PC-3 (cell line): ENCODE measurements at regions of chr11 and their contacts with region 1.

Region 1: GRCh38 chr11:86802601-86803051 is 2.3 kb downstream of the PRSS23 start:
- DNase-seq: peak; percentile 78
- ATAC-seq: peak; percentile 43
- H3K4me3 ChIP-seq: peak overlapping the region; percentile 97
- H3K27ac ChIP-seq: peak overlapping the region; percentile 66
- H3K4me1 ChIP-seq: peaks cover 50% of the 10 kb centered on the region
- H3K27me3 ChIP-seq: no peaks in the 10 kb centered on the region
- CTCF ChIP-seq: peak; percentile 54; the same call in 1 of the 2 replicates

Region 2: GRCh38 chr11:86608251-86608799 is 194.3 kb before region 1 on chr11:
- CTCF ChIA-PET with region 1: no interaction called
- POLR2A ChIA-PET with region 1: interaction called, 3 read pairs
- intact Hi-C with region 1: loop called (anchors 5 kb)
- DNase-seq: peak; percentile 82
- ATAC-seq: peak; percentile 39; the same call in 1 of the 2 replicates
- H3K4me3 ChIP-seq: no peak overlapping the region
- H3K27ac ChIP-seq: peak overlapping the region; percentile 85
- H3K4me1 ChIP-seq: peaks cover 35% of the 10 kb centered on the region
- H3K27me3 ChIP-seq: no peaks in the 10 kb centered on the region
- CTCF ChIP-seq: peak; percentile 96

Region 3: DNA sequence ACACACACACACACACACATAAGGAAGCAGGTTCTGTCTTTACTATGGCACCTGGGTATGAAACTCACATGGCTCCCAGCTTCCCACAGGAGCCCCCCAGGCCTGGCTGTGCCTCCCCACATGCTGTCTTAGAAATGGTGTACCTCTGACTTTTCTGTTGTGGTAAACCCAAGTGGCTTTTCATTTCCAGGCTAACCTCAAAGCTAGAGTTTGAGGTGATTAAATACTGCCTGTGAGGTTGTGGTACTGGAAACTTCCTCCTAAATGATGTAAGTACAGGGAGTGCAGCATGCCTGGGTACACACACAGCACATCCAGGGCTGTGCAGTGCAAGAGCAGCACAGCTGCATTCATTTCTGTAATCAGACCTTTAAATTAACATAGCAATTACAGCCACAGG is 164.6 kb before region 1 on chr11:
- CTCF ChIA-PET with region 1: no interaction called
- POLR2A ChIA-PET with region 1: interaction called, 4 read pairs
- intact Hi-C with region 1: loop called (anchors 5 kb)
- DNase-seq: no peak
- ATAC-seq: peak; percentile 23; the same call in 1 of the 2 replicates
- H3K4me3 ChIP-seq: 0 out of 2 replicates have a peak overlapping the region, but pooled peaks have one; percentile 22
- H3K27ac ChIP-seq: peak overlapping the region; percentile 95
- H3K4me1 ChIP-seq: peaks cover 43% of the 10 kb centered on the region
- H3K27me3 ChIP-seq: no peaks in the 10 kb centered on the region
- CTCF ChIP-seq: no peak

Region 4: GRCh38 chr11:86671682-86672621 is 130.7 kb before region 1 on chr11 and contains the start of gene ME3:
- CTCF ChIA-PET with region 1: no interaction called
- POLR2A ChIA-PET with region 1: interaction called, 5 read pairs
- intact Hi-C with region 1: loop called (anchors 2 kb)
- DNase-seq: peak; percentile 56
- ATAC-seq: peak; percentile 65
- H3K4me3 ChIP-seq: peak within 1 kb of the TSS; percentile 69
- H3K27ac ChIP-seq: peak within 1 kb of the TSS; percentile 83
- H3K4me1 ChIP-seq: peaks cover 45% of the 10 kb centered on the region
- H3K27me3 ChIP-seq: no peaks in the 10 kb centered on the region
- CTCF ChIP-seq: no peak
- total RNA-seq, gene ME3: 80.8 and 83.8 TPM in 2 replicates

Region 5: DNA sequence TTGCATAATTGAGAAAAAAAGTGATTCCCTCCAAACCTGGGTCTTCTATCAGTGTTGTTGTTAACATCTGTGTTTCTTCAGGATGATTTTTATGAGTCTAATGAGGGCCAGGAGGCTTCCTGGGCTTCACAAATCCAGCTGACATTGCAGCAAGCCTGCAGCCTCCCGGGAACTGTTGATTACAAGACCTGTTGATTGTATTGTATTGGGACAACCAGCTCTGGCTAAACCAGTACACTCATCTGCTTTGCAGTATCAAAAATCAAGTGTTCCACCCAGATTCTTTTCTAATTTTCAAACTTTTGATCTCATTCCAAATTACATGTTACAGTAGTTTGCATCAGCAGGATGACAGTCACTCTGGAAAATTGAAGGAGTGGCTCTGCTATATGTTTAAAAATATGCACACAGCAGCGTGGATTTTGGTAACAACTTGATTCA is 18.4 kb before region 1 on chr11:
- CTCF ChIA-PET with region 1: no interaction called
- POLR2A ChIA-PET with region 1: interaction called, 7 read pairs
- intact Hi-C with region 1: loop called (anchors 1 kb)
- DNase-seq: peak; percentile 8
- ATAC-seq: peak; percentile 72; the same call in 1 of the 2 replicates
- H3K4me3 ChIP-seq: no peak overlapping the region
- H3K27ac ChIP-seq: no peak overlapping the region
- H3K4me1 ChIP-seq: no peaks in the 10 kb centered on the region; the same call in 1 of the 2 replicates
- H3K27me3 ChIP-seq: no peaks in the 10 kb centered on the region
- CTCF ChIP-seq: no peak

Region 6: GRCh38 chr11:86848132-86848531 is 45.5 kb after region 1 on chr11:
- CTCF ChIA-PET with region 1: no interaction called
- POLR2A ChIA-PET with region 1: no interaction called
- intact Hi-C with region 1: no loop called
- DNase-seq: no peak
- ATAC-seq: no peak
- H3K4me3 ChIP-seq: no peak overlapping the region
- H3K27ac ChIP-seq: no peak overlapping the region
- H3K4me1 ChIP-seq: no peaks in the 10 kb centered on the region
- H3K27me3 ChIP-seq: no peaks in the 10 kb centered on the region
- CTCF ChIP-seq: no peak